Adrenal gland (tissue), 19 donors: ENCODE measurements at regions of chr5 and their contacts with region 1.

Region 1: GRCh38 chr5:172541099-172541771 is 86.9 kb upstream of the SH3PXD2B start:
- DNase-seq: peak in 2 of 7 donors; percentile 13 to 53
- H3K4me3 ChIP-seq: no peak overlapping the region
- H3K27ac ChIP-seq: no peak overlapping the region
- H3K4me1 ChIP-seq: peaks cover 0 to 6% of the 10 kb centered on the region in 2 donors
- H3K27me3 ChIP-seq: no peaks in the 10 kb centered on the region
- CTCF ChIP-seq: no peak
- POLR2A ChIP-seq: no peak

Region 2: GRCh38 chr5:172412724-172413286 is 128.4 kb before region 1 on chr5:
- intact Hi-C with region 1: no loop called
- DNase-seq: peak; percentile 74 to 87 (median 80)
- H3K4me3 ChIP-seq: no peak overlapping the region
- H3K27ac ChIP-seq: peak overlapping the region; percentile 70 to 95 (median 89)
- H3K4me1 ChIP-seq: peaks cover 59 to 73% of the 10 kb centered on the region in 2 donors
- H3K27me3 ChIP-seq: no peaks in the 10 kb centered on the region
- CTCF ChIP-seq: no peak
- POLR2A ChIP-seq: no peak

Region 3: DNA sequence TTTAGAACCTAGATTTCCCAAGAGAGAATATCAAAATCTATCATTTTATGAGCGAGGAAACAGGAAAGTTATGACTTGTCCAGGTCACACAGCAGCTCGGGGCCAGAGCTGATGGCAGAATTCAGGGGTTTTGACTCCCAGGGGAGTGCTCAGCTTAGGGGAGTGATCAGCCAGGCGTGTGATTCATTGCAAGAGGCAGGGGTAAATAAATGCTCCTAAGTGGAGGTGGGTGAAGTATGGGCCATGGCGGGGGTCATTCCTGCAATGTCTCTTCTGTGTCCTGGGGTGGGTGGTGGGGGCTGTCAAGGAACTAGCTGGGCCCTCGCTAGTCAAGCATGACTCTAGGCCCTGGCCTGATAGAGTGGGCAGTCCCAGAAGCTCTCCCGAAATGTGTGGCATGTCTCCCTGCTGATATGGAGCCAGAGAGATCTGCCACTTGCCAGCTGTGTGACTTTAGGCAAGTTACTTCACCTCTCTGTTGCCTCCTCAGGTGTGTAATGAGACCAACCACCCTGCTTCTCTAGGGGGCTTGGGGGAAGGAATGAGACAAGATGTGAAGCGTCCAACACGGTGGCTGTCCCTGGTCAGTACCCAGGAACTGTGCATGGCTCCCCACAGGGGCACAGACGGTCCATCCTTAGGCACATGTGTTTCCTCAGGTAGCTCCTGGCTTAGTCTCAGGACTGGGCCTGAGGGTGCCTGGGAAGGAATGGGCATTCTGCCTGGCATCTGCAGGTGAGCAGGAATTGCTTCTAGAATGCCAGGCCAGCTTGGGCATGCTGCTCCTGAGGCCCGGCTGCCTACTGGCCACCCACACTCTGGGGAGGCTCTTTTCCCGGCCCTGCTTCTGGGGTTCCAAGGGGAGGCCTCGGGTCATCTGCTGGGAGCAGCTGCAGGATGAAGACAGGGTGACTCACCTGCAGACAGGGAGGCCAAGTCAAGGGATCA is 50.4 kb before region 1 on chr5:
- intact Hi-C with region 1: loop called in 1 of 2 experiments (anchors 5 kb)
- DNase-seq: peak in 2 of 7 donors; percentile 23 to 37
- H3K4me3 ChIP-seq: no peak overlapping the region
- H3K27ac ChIP-seq: peak overlapping the region in 1 of 5 donors; percentile 2
- H3K4me1 ChIP-seq: no peaks in the 10 kb centered on the region
- H3K27me3 ChIP-seq: no peaks in the 10 kb centered on the region
- CTCF ChIP-seq: no peak
- POLR2A ChIP-seq: no peak